ENCODE measurements at regions of chr3 and their contacts with region 1.

Region 1: DNA sequence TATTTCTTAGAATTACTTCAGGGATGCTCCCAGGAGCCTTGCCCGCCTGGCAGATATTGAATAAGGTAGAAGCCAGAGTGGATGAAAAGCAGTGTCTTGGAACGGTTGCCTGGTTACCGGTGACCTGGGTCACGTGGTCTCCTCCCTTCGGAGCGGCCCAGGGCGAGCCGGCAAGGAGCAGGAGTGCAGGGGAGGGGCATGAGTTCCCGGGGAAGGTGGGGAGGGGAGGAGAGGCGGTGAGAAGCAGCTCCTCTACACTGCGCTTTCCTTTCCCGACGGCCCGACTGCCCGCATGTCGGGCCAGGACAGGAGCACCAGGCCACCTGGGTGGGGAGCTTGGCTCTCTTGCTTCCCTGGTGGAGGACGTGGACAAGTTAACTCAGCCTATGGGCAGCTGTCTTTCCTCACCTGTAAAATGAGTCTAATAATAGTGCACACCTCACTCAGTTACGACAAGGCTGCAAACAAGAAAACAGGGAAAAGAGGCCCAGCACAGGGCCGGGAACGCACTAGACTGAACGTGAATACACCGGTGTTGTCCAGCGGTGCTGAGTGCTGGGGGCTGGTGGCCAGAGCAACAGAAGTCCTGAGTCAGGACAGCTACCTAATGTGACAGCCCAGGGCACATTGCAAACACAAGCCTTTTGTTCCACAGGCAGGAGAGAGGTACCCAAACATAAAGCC is 198.3 kb downstream of the ADAMTS9 start:
- DNase-seq: peak; percentile 27
- H3K4me3 ChIP-seq: no peak overlapping the region
- H3K27ac ChIP-seq: no peak overlapping the region
- H3K4me1 ChIP-seq: no peaks in the 10 kb centered on the region
- H3K27me3 ChIP-seq: no peaks in the 10 kb centered on the region
- CTCF ChIP-seq: no peak
- POLR2A ChIP-seq: no peak

Region 2: DNA sequence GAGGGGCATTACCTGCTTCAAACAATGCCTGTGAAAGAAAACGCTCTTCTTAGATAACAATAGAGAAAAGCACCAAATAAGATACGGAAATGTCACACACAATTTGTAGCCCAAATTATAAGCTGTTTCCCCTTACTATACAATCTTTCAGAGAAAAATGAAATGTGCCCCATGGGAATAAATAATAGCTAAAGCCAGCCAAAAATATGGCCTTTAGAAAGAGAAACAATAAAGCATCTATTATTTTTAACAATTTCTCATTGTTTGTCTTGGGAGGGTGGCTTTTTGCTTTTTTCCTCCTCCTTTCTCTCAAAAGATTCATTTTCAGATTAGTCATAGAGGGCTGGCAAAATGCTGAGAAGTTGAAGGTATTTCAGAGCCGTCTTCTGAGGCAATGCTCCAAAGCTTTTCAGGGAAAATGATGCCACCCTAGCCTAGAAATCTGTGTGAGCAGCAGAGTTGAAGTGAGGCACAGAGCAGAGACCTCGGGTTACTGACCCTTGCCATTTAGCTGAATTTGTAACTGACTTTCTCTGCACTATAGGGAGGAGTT is 178.0 kb before region 1 on chr3:
- intact Hi-C with region 1: no loop called
- DNase-seq: no peak
- H3K4me3 ChIP-seq: no peak overlapping the region
- H3K27ac ChIP-seq: no peak overlapping the region
- H3K4me1 ChIP-seq: no peaks in the 10 kb centered on the region
- H3K27me3 ChIP-seq: no peaks in the 10 kb centered on the region
- CTCF ChIP-seq: no peak
- POLR2A ChIP-seq: no peak

Region 3: GRCh38 chr3:64399205-64399800 is 90.2 kb before region 1 on chr3:
- intact Hi-C with region 1: loop called (anchors 5 kb)
- DNase-seq: peak; percentile 46
- H3K4me3 ChIP-seq: no peak overlapping the region
- H3K27ac ChIP-seq: no peak overlapping the region
- H3K4me1 ChIP-seq: no peaks in the 10 kb centered on the region
- H3K27me3 ChIP-seq: no peaks in the 10 kb centered on the region
- CTCF ChIP-seq: peak; percentile 65 to 79 (median 73)
- POLR2A ChIP-seq: no peak

Region 4: GRCh38 chr3:64634417-64634816 is 144.9 kb after region 1 on chr3:
- intact Hi-C with region 1: no loop called
- DNase-seq: no peak
- H3K4me3 ChIP-seq: no peak overlapping the region
- H3K27ac ChIP-seq: no peak overlapping the region
- H3K4me1 ChIP-seq: no peaks in the 10 kb centered on the region
- H3K27me3 ChIP-seq: no peaks in the 10 kb centered on the region
- CTCF ChIP-seq: no peak
- POLR2A ChIP-seq: no peak

Region 5: GRCh38 chr3:64705946-64706345 is 216.4 kb after region 1 on chr3:
- intact Hi-C with region 1: no loop called
- DNase-seq: no peak
- H3K4me3 ChIP-seq: no peak overlapping the region
- H3K27ac ChIP-seq: no peak overlapping the region
- H3K4me1 ChIP-seq: no peaks in the 10 kb centered on the region
- H3K27me3 ChIP-seq: no peaks in the 10 kb centered on the region
- CTCF ChIP-seq: no peak
- POLR2A ChIP-seq: no peak